ENCODE measurements at regions of chr5 and their contacts with region 1.

Region 1: GRCh38 chr5:95781101-95781583 is 41.4 kb downstream of the GLRX start:
- DNase-seq: peak; percentile 86
- H3K4me3 Mint-ChIP-seq: peak overlapping the region; percentile 44
- H3K27ac Mint-ChIP-seq: peak overlapping the region; percentile 48
- H3K4me1 Mint-ChIP-seq: peaks cover 3% of the 10 kb centered on the region
- H3K27me3 Mint-ChIP-seq: no peaks in the 10 kb centered on the region

Region 2: GRCh38 chr5:94968507-94969095 is 812.5 kb before region 1 on chr5:
- CTCF ChIA-PET with region 1: no interaction called
- intact Hi-C with region 1: loop called (anchors 1 kb)
- DNase-seq: peak; percentile 10
- H3K4me3 Mint-ChIP-seq: no peak overlapping the region
- H3K27ac Mint-ChIP-seq: no peak overlapping the region
- H3K4me1 Mint-ChIP-seq: no peaks in the 10 kb centered on the region
- H3K27me3 Mint-ChIP-seq: no peaks in the 10 kb centered on the region

Region 3: DNA sequence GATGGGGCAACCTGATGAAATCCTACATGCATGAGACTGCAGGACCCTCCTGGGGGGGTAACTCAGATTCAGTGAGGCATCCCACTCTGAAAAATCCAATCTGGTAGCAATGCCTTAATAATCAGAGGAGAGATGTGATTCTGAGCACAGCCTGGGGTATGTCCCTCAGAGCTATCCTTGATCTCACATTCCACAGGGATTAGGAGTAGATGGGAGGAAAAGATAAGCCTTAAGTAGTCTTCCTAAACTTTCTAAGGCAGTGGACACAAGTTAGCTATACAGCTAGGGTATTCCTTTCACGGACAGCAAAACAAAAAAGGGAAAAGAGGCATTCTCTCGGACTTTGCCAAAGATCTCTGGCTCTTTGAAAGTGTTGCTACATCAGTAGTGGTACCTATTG is 94.5 kb before region 1 on chr5:
- CTCF ChIA-PET with region 1: no interaction called
- intact Hi-C with region 1: no loop called
- DNase-seq: no peak
- H3K4me3 Mint-ChIP-seq: no peak overlapping the region
- H3K27ac Mint-ChIP-seq: no peak overlapping the region
- H3K4me1 Mint-ChIP-seq: no peaks in the 10 kb centered on the region
- H3K27me3 Mint-ChIP-seq: no peaks in the 10 kb centered on the region

Region 4: GRCh38 chr5:95770830-95771708 is 10.1 kb before region 1 on chr5:
- CTCF ChIA-PET with region 1: interaction called, 32 read pairs
- intact Hi-C with region 1: no loop called
- DNase-seq: no peak
- H3K4me3 Mint-ChIP-seq: no peak overlapping the region
- H3K27ac Mint-ChIP-seq: no peak overlapping the region
- H3K4me1 Mint-ChIP-seq: no peaks in the 10 kb centered on the region
- H3K27me3 Mint-ChIP-seq: no peaks in the 10 kb centered on the region

Region 5: DNA sequence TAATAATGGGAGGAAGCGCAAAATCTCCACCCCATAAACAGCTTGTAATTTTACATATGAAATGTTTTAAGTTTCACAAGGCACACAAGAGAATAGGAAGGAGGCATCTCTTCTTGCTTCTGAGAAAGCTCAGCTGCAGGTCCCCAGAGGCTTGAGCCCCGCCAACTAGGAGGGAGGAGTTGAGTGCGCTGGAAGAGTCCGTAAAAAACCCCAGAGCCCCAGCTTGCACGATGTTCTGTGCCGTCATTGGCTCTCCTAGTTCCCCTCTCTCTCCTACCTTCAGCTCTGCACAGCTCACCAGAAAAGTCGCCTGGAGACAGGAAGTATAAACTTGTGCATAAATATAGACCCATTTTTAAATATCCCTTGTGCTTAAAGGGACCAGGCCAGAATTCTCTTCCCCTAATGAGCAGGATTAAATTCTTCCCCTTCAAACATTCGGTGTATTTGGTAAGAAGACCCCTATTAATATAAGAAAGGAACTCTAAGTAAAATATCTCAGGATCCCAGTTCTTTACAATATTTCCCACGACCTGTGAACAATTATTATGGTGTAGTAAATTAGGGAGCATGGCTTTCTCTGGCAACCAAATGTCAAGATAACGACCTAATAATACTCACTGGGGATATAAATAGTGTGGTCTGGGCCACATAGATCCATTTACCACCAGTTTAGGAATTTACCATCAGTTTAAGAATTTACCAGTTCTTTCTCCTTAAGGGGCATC is 27.7 kb after region 1 on chr5:
- CTCF ChIA-PET with region 1: interaction called, 33 read pairs
- intact Hi-C with region 1: loop called (anchors 1 kb)
- DNase-seq: peak; percentile 92
- H3K4me3 Mint-ChIP-seq: peak overlapping the region; percentile 57
- H3K27ac Mint-ChIP-seq: peak overlapping the region; percentile 81
- H3K4me1 Mint-ChIP-seq: peaks cover 55% of the 10 kb centered on the region
- H3K27me3 Mint-ChIP-seq: no peaks in the 10 kb centered on the region

Region 6: DNA sequence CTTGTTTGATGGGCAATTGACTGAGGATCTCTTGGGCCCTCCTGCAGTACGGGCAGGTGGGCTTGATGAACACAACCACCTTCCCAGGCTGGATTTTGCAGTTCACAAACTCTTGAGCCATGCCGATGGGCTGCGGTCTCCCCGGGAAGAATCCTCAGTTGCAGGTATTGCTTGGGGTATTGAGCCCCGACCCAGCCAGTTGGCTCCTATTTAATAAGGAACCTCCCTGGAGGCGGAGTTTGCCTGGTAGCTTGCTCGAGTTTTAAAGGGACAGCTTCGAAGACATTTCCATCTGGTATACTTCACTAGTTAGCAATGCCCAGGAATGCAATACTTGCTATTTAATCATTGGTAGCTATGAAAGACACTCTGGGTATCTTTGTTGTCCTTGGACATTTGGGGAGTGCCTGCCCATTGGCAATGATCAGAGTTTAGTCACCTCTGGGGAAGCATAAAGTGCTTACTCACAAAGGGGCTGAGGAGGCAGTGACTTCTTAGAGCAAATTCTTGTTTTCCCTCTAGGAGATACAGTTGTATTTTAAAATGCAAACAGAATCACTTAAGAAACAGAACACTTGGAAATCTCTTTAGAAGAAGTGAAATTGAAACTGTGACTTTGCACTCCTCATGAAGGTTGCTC is 41.5 kb after region 1 on chr5 and contains the start of gene GLRX:
- CTCF ChIA-PET with region 1: interaction called, 48 read pairs
- intact Hi-C with region 1: loop called (anchors 1 kb)
- DNase-seq: peak; percentile 64
- H3K4me3 Mint-ChIP-seq: peak within 1 kb of the TSS; percentile 96
- H3K27ac Mint-ChIP-seq: peak within 1 kb of the TSS; percentile 98
- H3K4me1 Mint-ChIP-seq: peaks cover 61% of the 10 kb centered on the region
- H3K27me3 Mint-ChIP-seq: no peaks in the 10 kb centered on the region
- total RNA-seq, gene GLRX: 50.4 to 51.1 TPM

Region 7: DNA sequence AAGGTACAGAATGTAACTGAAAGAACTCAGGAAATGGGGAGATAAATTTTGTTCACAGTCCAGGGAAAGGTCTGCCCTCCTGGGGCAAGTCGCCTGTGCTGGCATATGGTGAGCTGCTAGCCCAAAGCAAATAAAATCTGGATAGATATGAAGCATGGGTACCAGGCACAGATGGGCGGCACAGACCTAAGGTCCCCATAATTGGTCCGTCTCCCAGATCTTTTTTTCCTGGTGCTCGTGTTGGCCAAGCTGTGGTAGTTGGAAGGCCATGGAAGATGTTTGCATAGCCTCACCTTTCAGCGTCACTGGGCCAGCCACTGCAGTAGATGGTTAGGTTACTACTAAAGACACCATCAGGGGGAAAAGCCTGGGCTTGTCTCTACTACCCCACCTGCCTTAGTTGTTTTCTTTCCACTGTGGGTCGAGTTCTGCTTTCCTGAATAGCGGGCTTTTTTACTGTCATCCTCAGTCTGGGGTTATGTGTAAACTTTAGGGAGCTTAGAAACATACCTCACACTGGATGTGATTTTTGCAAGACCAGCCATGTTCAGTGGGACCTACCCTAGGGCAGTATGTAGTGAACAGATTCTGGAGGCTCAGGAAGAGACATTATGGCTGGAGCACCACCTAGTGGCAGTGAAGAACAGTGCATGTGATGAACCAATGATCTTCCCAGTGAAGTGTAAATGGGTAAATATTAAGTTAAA is 65.6 kb after region 1 on chr5:
- CTCF ChIA-PET with region 1: interaction called, 497 read pairs
- intact Hi-C with region 1: loop called (anchors 1 kb)
- DNase-seq: peak; percentile 81
- H3K4me3 Mint-ChIP-seq: no peak overlapping the region
- H3K27ac Mint-ChIP-seq: no peak overlapping the region
- H3K4me1 Mint-ChIP-seq: peaks cover 9% of the 10 kb centered on the region
- H3K27me3 Mint-ChIP-seq: no peaks in the 10 kb centered on the region

Region 8: DNA sequence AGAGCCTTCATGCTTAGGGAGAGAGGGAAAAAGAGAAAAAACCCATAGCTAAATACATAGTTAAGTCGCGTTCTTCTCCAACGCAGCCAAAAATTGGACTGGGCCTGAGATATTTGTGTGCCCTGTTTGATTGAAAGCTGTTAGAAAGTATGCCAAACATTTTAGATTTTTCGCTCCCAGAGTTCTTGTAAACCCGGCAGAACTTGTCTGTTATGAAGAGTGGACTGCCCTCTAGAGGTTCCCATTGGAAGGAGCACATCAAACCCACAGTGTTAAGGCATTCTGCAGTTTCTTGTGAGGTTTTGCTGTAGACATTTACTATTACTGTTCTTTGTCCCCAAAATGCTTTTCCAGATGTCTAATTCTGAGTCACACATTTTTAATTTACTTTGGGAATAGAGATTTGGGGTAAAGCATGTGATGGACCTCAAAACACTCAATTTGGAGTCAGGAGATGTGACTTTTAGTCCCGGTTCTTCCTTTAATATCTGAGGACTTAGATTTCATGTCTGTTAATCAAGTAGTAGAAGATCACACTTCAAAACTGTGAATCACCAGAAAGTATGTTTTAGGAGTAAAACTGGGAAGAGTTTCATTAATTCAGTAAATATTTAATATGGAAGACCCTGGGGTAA is 555.3 kb after region 1 on chr5:
- CTCF ChIA-PET with region 1: interaction called, 5 read pairs
- intact Hi-C with region 1: loop called (anchors 2 kb)
- DNase-seq: peak; percentile 81
- H3K4me3 Mint-ChIP-seq: no peak overlapping the region
- H3K27ac Mint-ChIP-seq: no peak overlapping the region
- H3K4me1 Mint-ChIP-seq: peaks cover 18% of the 10 kb centered on the region
- H3K27me3 Mint-ChIP-seq: peaks cover 16% of the 10 kb centered on the region

Measured in activated naive CD4-positive, alpha-beta T cell treated with anti-CD3 and anti-CD28 coated beads for 36 hours (primary cell).